Calu3 (cell line): ENCODE measurements at regions of chr7 and their contacts with region 1.

Region 1: DNA sequence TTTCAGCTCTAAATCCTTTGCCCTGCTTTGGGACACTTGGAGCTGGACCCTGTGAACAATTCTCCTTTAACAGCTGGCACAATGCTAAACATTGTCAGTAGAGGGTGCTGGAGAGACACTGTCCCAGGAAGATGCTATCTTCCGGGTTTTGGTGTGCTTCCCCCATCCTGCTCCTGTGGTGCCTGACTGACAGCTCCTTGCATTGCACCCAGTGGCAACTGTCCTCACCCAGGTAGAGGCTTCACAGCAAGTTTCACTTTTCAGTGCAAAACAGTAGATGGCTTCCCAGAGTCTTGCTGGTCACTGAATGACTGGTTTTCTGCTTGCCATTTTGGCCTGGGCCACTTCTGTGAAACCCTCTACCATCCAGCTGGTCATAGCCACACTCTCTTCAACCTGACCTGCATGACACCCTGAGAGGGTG is 77.3 kb downstream of the CDC14C start:
- DNase-seq: peak; percentile 56
- H3K4me3 Mint-ChIP-seq: no peak overlapping the region
- H3K27ac Mint-ChIP-seq: no peak overlapping the region
- H3K4me1 Mint-ChIP-seq: no peaks in the 10 kb centered on the region
- H3K27me3 Mint-ChIP-seq: no peaks in the 10 kb centered on the region
- CTCF ChIP-seq: peak; percentile 45

Region 2: DNA sequence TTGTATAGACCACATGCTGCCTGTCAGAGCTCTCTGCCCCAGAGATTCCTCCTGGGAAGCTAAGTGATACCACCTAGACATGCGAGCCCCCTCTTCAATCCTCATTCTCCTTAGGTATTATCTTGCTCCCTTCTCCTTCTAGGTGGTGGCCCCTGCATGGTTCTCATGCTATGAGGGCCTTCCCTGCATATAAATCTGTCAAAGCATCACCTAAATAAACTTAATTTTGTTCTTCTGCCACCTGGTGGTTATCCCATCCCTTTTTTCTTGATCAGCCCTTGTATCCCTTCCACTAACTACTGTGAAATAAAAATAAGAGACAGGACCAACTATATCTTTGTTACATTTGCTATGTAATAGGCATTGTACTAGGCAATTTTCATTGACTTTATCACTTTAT is 164.8 kb after region 1 on chr7:
- CTCF ChIA-PET with region 1: interaction called, 6 read pairs
- intact Hi-C with region 1: loop called (anchors 1 kb)
- DNase-seq: no peak
- H3K4me3 Mint-ChIP-seq: no peak overlapping the region
- H3K27ac Mint-ChIP-seq: no peak overlapping the region
- H3K4me1 Mint-ChIP-seq: no peaks in the 10 kb centered on the region
- H3K27me3 Mint-ChIP-seq: no peaks in the 10 kb centered on the region
- CTCF ChIP-seq: peak; percentile 10

Region 3: GRCh38 chr7:49187543-49188268 is 186.1 kb after region 1 on chr7:
- CTCF ChIA-PET with region 1: no interaction called
- intact Hi-C with region 1: loop called (anchors 5 kb)
- DNase-seq: peak; percentile 3
- H3K4me3 Mint-ChIP-seq: no peak overlapping the region
- H3K27ac Mint-ChIP-seq: no peak overlapping the region
- H3K4me1 Mint-ChIP-seq: no peaks in the 10 kb centered on the region
- H3K27me3 Mint-ChIP-seq: no peaks in the 10 kb centered on the region
- CTCF ChIP-seq: no peak

Region 4: DNA sequence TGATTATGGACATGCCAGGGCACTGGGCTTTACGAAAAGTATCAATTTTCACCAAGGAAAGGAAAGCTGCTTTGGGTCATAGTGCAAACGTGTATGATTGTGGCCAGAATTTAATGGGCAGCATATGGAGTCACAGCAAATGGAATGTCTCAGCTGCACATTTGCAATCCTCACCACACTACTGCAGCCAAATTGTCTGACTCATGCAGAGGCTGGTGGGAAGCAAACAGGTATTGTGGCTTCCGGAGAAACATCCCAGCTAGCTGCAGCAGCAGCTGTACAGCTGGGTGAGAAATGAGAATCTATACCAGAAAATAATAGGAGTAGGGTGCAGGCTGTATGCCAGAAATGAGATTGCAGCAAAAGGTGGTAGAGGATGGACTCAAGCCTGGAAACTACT is 397.1 kb after region 1 on chr7:
- CTCF ChIA-PET with region 1: no interaction called
- intact Hi-C with region 1: no loop called
- DNase-seq: no peak
- H3K4me3 Mint-ChIP-seq: no peak overlapping the region
- H3K27ac Mint-ChIP-seq: no peak overlapping the region
- H3K4me1 Mint-ChIP-seq: no peaks in the 10 kb centered on the region
- H3K27me3 Mint-ChIP-seq: no peaks in the 10 kb centered on the region
- CTCF ChIP-seq: no peak

Region 5: DNA sequence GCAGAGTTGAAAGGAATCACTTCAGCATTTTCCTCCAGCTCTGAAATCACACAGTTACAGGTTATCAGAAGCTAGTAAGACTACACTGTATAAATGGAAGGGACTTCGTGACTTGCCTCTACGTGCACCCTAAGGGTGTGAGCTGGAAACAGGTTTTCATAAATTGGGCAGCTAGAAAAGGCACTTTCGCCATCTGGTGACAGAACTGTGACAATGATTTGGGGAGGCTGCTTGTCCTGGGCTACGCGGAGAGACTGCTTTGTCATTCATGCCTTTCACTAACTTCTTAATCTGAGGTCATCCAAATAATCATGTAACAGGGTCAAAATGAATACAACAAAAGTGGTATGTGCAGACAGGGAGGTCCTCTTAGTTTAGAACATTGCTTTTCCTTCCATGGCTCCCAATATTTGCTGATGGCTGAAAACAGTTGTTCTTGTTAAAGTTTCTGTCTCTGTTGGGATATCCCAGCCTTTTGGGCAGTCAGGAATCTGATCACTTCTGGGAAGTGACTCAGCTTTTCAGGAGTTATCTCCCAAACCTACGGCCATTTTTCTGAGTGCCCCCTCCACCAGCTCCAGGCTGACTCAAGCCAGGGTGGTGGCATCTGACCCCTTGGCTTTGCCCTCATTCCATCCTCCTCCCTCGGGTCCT is 789.6 kb after region 1 on chr7:
- CTCF ChIA-PET with region 1: no interaction called
- intact Hi-C with region 1: loop called (anchors 5 kb)
- DNase-seq: peak; percentile 46
- H3K4me3 Mint-ChIP-seq: no peak overlapping the region
- H3K27ac Mint-ChIP-seq: no peak overlapping the region
- H3K4me1 Mint-ChIP-seq: no peaks in the 10 kb centered on the region
- H3K27me3 Mint-ChIP-seq: no peaks in the 10 kb centered on the region
- CTCF ChIP-seq: peak; percentile 21

Region 6: GRCh38 chr7:49852619-49853462 is 851.2 kb after region 1 on chr7:
- CTCF ChIA-PET with region 1: interaction called, 3 read pairs
- intact Hi-C with region 1: loop called (anchors 5 kb)
- DNase-seq: peak; percentile 68
- H3K4me3 Mint-ChIP-seq: no peak overlapping the region
- H3K27ac Mint-ChIP-seq: no peak overlapping the region
- H3K4me1 Mint-ChIP-seq: peaks cover 19% of the 10 kb centered on the region
- H3K27me3 Mint-ChIP-seq: no peaks in the 10 kb centered on the region
- CTCF ChIP-seq: peak; percentile 88